PC-9 (cell line): ENCODE measurements at regions of chr6 and their contacts with region 1.

Region 1: GRCh38 chr6:145880361-145880760 is 65.8 kb upstream of the FBXO30 start:
- DNase-seq: no peak
- H3K4me3 ChIP-seq: no peak overlapping the region
- H3K27ac ChIP-seq: no peak overlapping the region
- H3K4me1 ChIP-seq: no peaks in the 10 kb centered on the region
- H3K27me3 ChIP-seq: no peaks in the 10 kb centered on the region
- CTCF ChIP-seq: no peak

Region 2: DNA sequence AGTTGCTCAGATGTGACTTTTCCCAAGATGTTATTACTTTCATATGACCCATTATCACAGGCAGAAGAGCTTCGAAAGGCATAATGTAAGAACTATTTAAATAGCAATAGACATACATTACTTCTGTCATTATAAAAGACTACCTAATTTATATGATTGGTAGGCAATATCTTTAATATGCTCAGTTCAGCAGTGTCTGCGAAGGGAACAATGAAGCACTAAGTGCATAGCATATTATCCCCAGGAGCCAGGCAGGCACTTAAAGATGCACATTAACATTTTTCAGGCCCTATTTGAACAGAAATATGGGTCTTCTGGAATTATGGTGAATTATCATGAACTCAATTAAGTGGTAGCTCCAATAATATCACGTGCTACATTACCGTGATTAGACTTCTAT is 362.9 kb before region 1 on chr6:
- CTCF ChIA-PET with region 1: no interaction called
- POLR2A ChIA-PET with region 1: interaction called, 16 read pairs
- intact Hi-C with region 1: no loop called
- DNase-seq: no peak
- H3K4me3 ChIP-seq: no peak overlapping the region
- H3K27ac ChIP-seq: no peak overlapping the region
- H3K4me1 ChIP-seq: no peaks in the 10 kb centered on the region
- H3K27me3 ChIP-seq: no peaks in the 10 kb centered on the region
- CTCF ChIP-seq: no peak